Sciatic nerve (tissue), 2 donors: ENCODE measurements at regions of chr10 and their contacts with region 1.

Region 1: DNA sequence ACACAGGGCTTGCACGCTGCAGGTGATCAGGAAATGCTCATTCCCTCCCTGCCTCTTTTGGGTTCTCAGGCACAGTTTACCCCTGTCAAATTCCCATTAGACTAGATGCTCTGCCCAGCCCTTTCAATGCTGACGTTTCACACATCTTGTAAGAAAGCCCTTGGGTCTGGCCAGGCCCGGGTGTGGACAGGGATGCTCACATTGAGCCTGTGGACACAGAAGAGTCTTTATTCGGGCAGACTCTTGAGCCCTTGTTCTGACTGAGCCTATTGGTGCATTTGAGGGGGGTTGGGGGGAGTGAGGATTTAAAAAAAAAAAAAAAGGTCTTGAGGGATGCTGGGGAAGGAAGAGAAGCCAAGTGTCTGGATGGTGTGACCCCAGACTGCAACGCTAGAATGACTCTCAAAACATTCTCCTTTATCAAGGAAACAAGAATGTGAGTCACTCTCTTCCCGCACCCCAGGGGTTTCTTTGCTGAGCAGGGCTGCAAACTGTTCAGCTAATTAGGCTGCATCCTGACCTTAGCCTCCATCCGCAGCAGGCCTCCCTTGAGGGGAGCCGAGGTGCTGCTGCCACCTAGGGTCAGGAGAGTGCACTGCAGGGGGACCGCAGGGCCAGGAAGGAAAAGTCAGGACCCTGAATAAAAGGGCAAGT is 53.6 kb upstream of the TMEM72 start:
- DNase-seq: peak; percentile 87
- ATAC-seq: peak; percentile 93

Region 2: GRCh38 chr10:44386546-44387052 is 470.9 kb before region 1 on chr10:
- intact Hi-C with region 1: loop called (anchors 10 kb)
- DNase-seq: peak; percentile 79
- ATAC-seq: peak; percentile 85

Region 3: GRCh38 chr10:44589181-44589943 is 268.1 kb before region 1 on chr10:
- intact Hi-C with region 1: no loop called
- DNase-seq: no peak
- ATAC-seq: no peak

Region 4: GRCh38 chr10:45063591-45064231 is 206.2 kb after region 1 on chr10:
- intact Hi-C with region 1: no loop called
- DNase-seq: no peak
- ATAC-seq: no peak